Activated T-helper 1 cell treated with anti-CD3 and anti-CD28 coated beads, Interleukin-12 subunit alpha, Interleukin-12 subunit beta, Interleukin-2, Interleukin-4 antibody, amounts not matched to agents 30 ng/mL and 10 ng/mL and 1 ng/mL, durations not matched to agents 14 hours and 24 hours and 36 hours (primary cell): ENCODE measurements at regions of chr1 and their contacts with region 1.

Region 1: DNA sequence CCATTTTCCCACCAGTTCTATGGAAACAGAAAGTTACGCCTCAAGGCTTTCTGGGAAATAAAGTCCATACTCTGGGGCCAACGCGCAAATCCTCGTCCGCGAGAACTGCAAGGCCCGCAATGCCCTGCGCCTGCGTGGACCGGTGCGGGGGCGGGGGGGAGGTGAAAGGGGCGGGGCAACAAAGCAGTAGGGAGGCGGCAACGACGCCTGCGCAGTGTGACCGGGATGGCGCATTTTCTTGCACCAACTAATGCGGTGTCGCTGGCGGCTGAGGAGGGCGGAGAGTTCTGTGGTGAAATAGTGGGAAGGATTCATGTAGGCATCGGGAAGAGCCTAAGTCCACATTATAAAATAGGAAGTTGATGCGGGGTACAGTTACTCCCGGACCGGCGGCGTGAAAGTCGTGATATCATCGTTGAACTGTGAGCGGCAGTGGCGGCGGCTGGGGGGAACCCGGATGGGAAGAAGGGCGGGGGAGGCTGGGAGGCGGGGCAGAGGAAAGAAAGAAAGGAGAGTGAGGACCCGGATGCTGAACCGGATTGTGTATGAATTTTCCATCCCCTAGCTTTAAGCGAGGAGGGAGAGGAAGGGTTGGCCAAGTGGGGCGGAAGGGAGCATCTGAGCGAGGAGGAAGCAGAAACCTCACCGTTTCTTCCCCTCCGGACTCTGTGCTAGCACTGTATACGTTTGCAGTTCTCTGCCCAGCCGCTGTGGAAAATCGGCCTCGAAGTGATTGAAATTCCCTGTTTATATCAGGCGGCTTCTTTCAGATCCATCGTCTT is at the start of gene GGPS1:
- DNase-seq: peak; percentile 94
- H3K4me3 Mint-ChIP-seq: no peak within 1 kb of the TSS
- H3K27ac Mint-ChIP-seq: no peak within 1 kb of the TSS
- H3K4me1 Mint-ChIP-seq: peaks cover 28% of the 10 kb centered on the region
- H3K27me3 Mint-ChIP-seq: no peaks in the 10 kb centered on the region
- total RNA-seq, gene GGPS1: 28.8 and 29.8 TPM in 2 replicates

Region 2: GRCh38 chr1:234478481-234479309 is 849.9 kb before region 1 on chr1 and contains the start of gene TARBP1:
- intact Hi-C with region 1: loop called (anchors 2 kb)
- DNase-seq: peak; percentile 76
- H3K4me3 Mint-ChIP-seq: peak within 1 kb of the TSS; percentile 90
- H3K27ac Mint-ChIP-seq: peak within 1 kb of the TSS; percentile 75
- H3K4me1 Mint-ChIP-seq: peaks cover 47% of the 10 kb centered on the region
- H3K27me3 Mint-ChIP-seq: peaks cover 17% of the 10 kb centered on the region
- total RNA-seq, gene TARBP1: 71.7 and 78.9 TPM in 2 replicates

Region 3: DNA sequence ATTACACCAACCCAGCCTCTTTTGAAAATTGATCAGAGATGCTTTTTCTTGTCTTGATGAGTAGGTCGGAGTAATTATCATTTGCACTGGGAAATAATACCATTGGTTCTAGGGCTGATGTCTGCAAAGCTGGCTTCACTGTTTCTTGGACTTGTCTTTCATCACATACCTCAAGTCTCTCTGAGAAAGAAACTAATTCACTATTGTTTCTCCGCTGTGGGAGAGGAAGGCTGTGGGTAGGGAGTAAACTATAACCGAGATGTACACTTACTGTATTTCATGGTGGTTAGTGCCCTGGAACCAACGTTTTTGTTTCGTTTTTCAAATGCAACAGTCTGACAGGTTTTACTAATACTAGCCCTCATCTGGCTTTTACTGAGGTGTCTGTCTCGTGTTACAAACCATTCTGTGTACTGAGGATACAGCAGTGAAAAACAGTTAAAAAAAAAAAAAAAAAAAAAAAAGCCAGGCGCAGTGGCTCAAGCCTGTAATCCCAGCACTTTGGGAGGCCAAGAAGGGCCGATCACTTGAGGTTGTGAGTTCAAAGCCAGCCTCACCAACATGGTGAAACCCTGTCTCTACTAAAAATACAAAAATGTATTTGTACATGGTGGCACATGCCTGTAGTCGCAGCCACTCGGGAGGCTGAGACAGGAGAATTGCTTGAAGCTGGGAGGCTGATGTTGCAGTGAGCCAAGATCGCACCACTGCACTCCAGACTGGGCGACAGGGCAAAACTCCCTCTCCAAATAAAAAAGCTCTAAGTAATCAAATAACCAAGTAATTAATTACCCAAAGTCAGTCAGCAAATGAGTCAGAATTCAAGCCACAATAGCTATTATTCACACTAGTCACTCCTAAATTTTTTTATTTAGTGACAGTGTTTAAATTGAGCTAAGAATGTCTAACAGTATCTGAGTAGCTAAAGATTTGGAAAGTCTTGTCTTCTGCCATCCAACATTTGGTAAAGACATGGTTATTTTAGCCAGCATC is 223.2 kb before region 1 on chr1:
- intact Hi-C with region 1: loop called (anchors 2 kb)
- DNase-seq: peak; percentile 26
- H3K4me3 Mint-ChIP-seq: peak overlapping the region; percentile 81
- H3K27ac Mint-ChIP-seq: peak overlapping the region; percentile 85
- H3K4me1 Mint-ChIP-seq: peaks cover 48% of the 10 kb centered on the region
- H3K27me3 Mint-ChIP-seq: no peaks in the 10 kb centered on the region

Region 4: GRCh38 chr1:235206533-235207208 is 121.9 kb before region 1 on chr1:
- intact Hi-C with region 1: loop called (anchors 1 kb)
- DNase-seq: no peak
- H3K4me3 Mint-ChIP-seq: peak overlapping the region; percentile 17
- H3K27ac Mint-ChIP-seq: peak overlapping the region; percentile 87
- H3K4me1 Mint-ChIP-seq: peaks cover 23% of the 10 kb centered on the region
- H3K27me3 Mint-ChIP-seq: no peaks in the 10 kb centered on the region

Region 5: GRCh38 chr1:235295902-235296376 is 32.6 kb before region 1 on chr1:
- intact Hi-C with region 1: loop called (anchors 2 kb)
- DNase-seq: no peak
- H3K4me3 Mint-ChIP-seq: no peak overlapping the region
- H3K27ac Mint-ChIP-seq: no peak overlapping the region
- H3K4me1 Mint-ChIP-seq: peaks cover 49% of the 10 kb centered on the region
- H3K27me3 Mint-ChIP-seq: no peaks in the 10 kb centered on the region

Region 6: GRCh38 chr1:235307158-235308124 is 21.1 kb before region 1 on chr1:
- intact Hi-C with region 1: no loop called
- DNase-seq: no peak
- H3K4me3 Mint-ChIP-seq: no peak overlapping the region
- H3K27ac Mint-ChIP-seq: no peak overlapping the region
- H3K4me1 Mint-ChIP-seq: peaks cover 50% of the 10 kb centered on the region
- H3K27me3 Mint-ChIP-seq: no peaks in the 10 kb centered on the region

Region 7: GRCh38 chr1:235415008-235415904 is 86.7 kb after region 1 on chr1:
- intact Hi-C with region 1: loop called (anchors 1 kb)
- DNase-seq: peak; percentile 36
- H3K4me3 Mint-ChIP-seq: no peak overlapping the region
- H3K27ac Mint-ChIP-seq: no peak overlapping the region
- H3K4me1 Mint-ChIP-seq: no peaks in the 10 kb centered on the region
- H3K27me3 Mint-ChIP-seq: no peaks in the 10 kb centered on the region

Region 8: DNA sequence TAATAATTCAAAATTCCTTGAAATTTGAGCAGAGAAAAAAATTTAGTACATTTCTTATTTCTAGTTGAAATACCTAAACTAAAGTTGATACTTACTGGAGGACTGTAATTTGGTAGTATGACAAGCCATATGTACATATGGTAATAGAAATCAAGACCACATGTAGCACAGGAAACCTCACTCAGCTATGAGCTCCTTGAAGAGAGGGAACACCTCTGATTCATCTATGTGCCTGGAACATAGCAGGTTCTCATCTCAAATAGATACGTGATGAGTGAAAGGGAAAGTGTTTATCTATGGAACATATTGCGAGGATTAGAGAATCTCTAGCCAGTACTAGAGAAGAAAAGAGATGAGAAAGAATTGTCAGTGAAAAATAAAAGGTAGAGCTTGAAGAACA is 369.0 kb after region 1 on chr1:
- intact Hi-C with region 1: loop called (anchors 5 kb)
- DNase-seq: no peak
- H3K4me3 Mint-ChIP-seq: no peak overlapping the region
- H3K27ac Mint-ChIP-seq: peak overlapping the region; percentile 91
- H3K4me1 Mint-ChIP-seq: peaks cover 20% of the 10 kb centered on the region
- H3K27me3 Mint-ChIP-seq: no peaks in the 10 kb centered on the region